Activated T-helper 2 cell treated with anti-CD3 and anti-CD28 coated beads, Interferon-gamma antibody, Interleukin-2, Interleukin-4, amounts not matched to agents 10 μg/mL and 5 μg/mL and 100 μg/mL, durations not matched to agents 14 hours and 24 hours and 36 hours (primary cell): ENCODE measurements at regions of chr10 and their contacts with region 1.

Region 1: GRCh38 chr10:89332123-89332633 is 4.4 kb downstream of the IFIT3 start:
- DNase-seq: peak; percentile 30
- H3K4me3 Mint-ChIP-seq: peak overlapping the region; percentile 73
- H3K27ac Mint-ChIP-seq: peak overlapping the region; percentile 68
- H3K4me1 Mint-ChIP-seq: peaks cover 61% of the 10 kb centered on the region
- H3K27me3 Mint-ChIP-seq: peaks cover 42% of the 10 kb centered on the region

Region 2: DNA sequence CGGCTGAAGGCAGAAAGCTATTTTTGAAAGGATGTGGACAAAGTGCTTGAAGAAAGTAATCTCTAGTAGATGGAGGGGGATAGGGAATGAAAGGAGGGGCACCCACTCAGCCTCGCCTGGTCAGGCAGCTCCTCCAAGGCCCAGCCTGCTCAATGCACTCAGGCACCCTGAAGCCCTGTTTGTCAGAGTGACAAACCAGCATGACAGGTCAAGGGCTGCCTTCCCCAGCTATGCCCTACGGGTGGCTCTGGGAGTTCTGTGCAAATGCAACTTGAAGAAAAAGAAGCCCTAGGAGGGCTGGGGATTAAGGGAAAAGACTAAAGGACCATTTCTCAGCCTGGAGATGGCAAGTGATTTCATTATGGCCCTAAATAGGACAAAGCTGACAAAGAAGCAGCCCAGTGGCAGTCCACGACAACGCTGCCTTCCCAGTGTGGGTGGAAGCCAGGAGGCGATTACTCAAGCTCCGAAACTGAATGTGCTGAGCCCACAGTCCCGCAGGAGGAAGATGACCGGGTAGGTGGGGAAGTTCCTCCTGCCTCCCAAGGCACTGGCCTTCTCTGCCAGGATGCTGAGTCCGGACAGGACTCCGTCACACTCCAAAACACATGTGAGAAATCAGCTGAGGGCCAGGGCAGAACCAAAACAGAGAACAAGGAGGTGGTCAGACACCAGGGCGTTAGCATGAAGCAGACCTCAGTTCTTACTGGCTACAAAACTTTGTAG is 96.9 kb before region 1 on chr10:
- intact Hi-C with region 1: no loop called
- DNase-seq: no peak
- H3K4me3 Mint-ChIP-seq: no peak overlapping the region
- H3K27ac Mint-ChIP-seq: no peak overlapping the region
- H3K4me1 Mint-ChIP-seq: peaks cover 2% of the 10 kb centered on the region
- H3K27me3 Mint-ChIP-seq: no peaks in the 10 kb centered on the region

Region 3: DNA sequence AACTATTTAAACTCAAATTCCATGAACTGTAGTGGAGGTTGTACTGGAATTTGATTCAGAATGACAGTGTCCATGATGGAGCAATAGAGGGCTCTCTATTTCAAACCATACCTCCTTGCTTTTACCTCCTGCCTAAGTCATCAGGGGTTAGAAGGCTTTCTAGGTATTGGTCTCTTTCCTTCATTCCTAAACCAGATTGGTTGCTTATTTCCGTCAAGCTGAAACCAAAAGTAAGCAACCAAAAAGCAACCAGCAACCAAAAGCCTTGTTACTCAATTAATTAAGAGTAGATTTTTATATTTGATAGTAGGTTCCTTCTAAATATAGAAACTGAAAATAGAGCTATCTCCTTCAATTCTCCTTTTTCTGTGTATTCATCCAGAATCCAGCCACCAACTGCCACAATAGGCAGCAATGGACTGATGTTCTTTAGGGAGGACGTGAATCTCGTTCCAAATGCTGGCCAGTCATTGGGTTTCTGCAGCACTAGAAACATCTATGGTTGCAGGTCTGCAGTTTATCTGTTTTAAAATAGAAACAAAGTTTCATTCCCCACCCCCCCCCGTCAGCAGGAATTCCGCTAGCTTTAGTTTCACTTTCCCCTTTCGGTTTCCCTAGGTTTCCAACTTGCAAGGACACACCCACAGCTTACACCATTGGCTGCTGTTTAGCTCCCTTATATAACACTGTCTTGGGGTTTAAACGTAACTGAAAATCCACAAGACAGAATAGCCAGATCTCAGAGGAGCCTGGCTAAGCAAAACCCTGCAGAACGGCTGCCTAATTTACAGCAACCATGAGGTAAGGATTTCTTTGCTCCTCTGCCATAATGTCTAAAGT is 60.0 kb after region 1 on chr10 and contains the start of gene IFIT1:
- intact Hi-C with region 1: loop called (anchors 1 kb)
- DNase-seq: peak; percentile 44
- H3K4me3 Mint-ChIP-seq: peak within 1 kb of the TSS; percentile 80
- H3K27ac Mint-ChIP-seq: peak within 1 kb of the TSS; percentile 3
- H3K4me1 Mint-ChIP-seq: peaks cover 16% of the 10 kb centered on the region
- H3K27me3 Mint-ChIP-seq: peaks cover 5% of the 10 kb centered on the region
- total RNA-seq, gene IFIT1: 0.09 and 0.32 TPM in 2 replicates

Region 4: DNA sequence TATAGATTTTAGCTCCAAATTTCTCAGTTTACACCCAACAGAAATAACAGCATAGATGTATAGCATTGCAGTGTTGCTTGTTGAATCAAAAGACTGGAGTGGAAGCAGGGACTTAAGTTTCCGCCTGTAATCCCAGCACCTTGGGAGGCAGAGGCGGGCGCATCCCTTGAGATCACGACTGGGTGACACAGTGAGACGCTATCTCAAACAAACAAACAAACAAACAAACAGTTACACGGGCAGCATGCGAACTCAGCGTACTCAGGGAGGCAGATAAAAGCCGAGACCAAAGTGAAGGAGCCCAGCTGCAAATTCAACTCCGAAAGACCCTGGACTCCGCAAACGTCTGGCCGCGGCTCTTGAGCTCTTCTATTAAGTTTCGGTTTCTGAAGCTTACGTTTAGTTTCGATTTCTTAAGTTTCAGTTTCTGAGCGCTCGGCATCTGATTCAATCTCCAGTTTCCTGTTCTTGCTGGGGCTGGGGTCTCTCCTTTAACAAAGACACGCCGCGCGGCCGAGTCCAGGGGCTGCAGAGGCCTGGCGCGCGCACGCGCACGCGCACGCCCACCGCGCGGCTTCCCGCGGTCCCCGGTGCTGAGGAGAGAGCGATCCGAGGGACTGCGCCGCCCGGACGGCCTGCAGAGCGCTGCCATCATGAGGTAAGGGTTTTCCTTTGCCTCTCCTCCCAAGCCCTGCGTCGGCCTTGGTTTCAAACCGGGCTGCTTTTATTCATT is 82.1 kb after region 1 on chr10 and contains the start of gene IFIT5:
- intact Hi-C with region 1: loop called (anchors 1 kb)
- DNase-seq: peak; percentile 67
- H3K4me3 Mint-ChIP-seq: peak within 1 kb of the TSS; percentile 87
- H3K27ac Mint-ChIP-seq: peak within 1 kb of the TSS; percentile 93
- H3K4me1 Mint-ChIP-seq: peaks cover 40% of the 10 kb centered on the region
- H3K27me3 Mint-ChIP-seq: peaks cover 6% of the 10 kb centered on the region
- total RNA-seq, gene IFIT5: 4.4 and 4.8 TPM in 2 replicates